Activated CD4-positive, alpha-beta memory T cell treated with anti-CD3 and anti-CD28 coated beads for 36 hours (primary cell): ENCODE measurements at regions of chr6 and their contacts with region 1.

Region 1: GRCh38 chr6:150600301-150601017 is 774 bp downstream of the PLEKHG1 start:
- DNase-seq: peak; percentile 89
- H3K4me3 Mint-ChIP-seq: peak overlapping the region; percentile 84
- H3K27ac Mint-ChIP-seq: peak overlapping the region; percentile 88
- H3K4me1 Mint-ChIP-seq: peaks cover 19% of the 10 kb centered on the region
- H3K27me3 Mint-ChIP-seq: peaks cover 48% of the 10 kb centered on the region

Region 2: GRCh38 chr6:150391890-150392289 is 208.6 kb before region 1 on chr6:
- CTCF ChIA-PET with region 1: no interaction called
- POLR2A ChIA-PET with region 1: no interaction called
- intact Hi-C with region 1: no loop called
- DNase-seq: no peak
- H3K4me3 Mint-ChIP-seq: no peak overlapping the region
- H3K27ac Mint-ChIP-seq: no peak overlapping the region
- H3K4me1 Mint-ChIP-seq: no peaks in the 10 kb centered on the region
- H3K27me3 Mint-ChIP-seq: peaks cover 10% of the 10 kb centered on the region

Region 3: GRCh38 chr6:150478651-150479545 is 121.6 kb before region 1 on chr6:
- CTCF ChIA-PET with region 1: no interaction called
- POLR2A ChIA-PET with region 1: no interaction called
- intact Hi-C with region 1: no loop called
- DNase-seq: no peak
- H3K4me3 Mint-ChIP-seq: no peak overlapping the region
- H3K27ac Mint-ChIP-seq: no peak overlapping the region
- H3K4me1 Mint-ChIP-seq: no peaks in the 10 kb centered on the region
- H3K27me3 Mint-ChIP-seq: peaks cover 6% of the 10 kb centered on the region

Region 4: DNA sequence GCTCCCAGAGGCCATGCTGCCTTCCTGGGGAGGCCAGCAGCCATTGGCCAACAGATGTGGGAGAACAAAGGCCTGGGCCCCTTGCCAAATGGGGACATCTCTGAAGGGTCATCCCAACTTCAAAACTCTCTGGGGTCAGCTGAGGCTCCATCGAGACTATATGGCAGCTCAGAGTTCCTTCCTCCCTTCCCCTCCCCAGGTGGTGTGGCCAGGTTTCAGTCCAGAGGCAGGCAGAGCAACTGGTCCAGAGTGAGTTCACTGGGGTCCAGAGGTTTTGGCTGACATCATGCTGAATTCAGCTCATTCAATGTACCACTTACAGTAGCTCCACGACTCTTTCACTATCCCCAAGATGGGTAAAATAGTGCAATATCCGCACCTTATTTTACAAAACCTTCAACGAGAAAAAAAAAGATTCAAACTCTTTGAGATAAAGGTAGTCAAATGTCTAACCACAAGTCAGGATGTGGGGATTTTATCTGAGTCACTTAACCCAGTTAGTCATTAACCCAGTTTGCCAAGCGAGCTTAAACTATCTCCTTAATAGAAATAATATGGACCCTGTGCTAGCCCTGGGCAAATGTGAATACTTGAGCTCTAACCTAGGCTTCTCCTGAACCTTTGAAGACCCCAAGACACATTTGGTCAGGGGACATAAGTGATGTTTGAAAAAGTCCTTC is 109.2 kb before region 1 on chr6:
- CTCF ChIA-PET with region 1: interaction called, 4 read pairs
- POLR2A ChIA-PET with region 1: interaction called, 3 read pairs
- intact Hi-C with region 1: loop called (anchors 1 kb)
- DNase-seq: peak; percentile 35
- H3K4me3 Mint-ChIP-seq: no peak overlapping the region
- H3K27ac Mint-ChIP-seq: peak overlapping the region; percentile 73
- H3K4me1 Mint-ChIP-seq: peaks cover 25% of the 10 kb centered on the region
- H3K27me3 Mint-ChIP-seq: no peaks in the 10 kb centered on the region

Region 5: GRCh38 chr6:150617496-150618460 is 17.3 kb after region 1 on chr6:
- CTCF ChIA-PET with region 1: interaction called, 4 read pairs
- POLR2A ChIA-PET with region 1: no interaction called
- intact Hi-C with region 1: loop called (anchors 2 kb)
- DNase-seq: no peak
- H3K4me3 Mint-ChIP-seq: no peak overlapping the region
- H3K27ac Mint-ChIP-seq: no peak overlapping the region
- H3K4me1 Mint-ChIP-seq: peaks cover 9% of the 10 kb centered on the region
- H3K27me3 Mint-ChIP-seq: peaks cover 12% of the 10 kb centered on the region

Region 6: DNA sequence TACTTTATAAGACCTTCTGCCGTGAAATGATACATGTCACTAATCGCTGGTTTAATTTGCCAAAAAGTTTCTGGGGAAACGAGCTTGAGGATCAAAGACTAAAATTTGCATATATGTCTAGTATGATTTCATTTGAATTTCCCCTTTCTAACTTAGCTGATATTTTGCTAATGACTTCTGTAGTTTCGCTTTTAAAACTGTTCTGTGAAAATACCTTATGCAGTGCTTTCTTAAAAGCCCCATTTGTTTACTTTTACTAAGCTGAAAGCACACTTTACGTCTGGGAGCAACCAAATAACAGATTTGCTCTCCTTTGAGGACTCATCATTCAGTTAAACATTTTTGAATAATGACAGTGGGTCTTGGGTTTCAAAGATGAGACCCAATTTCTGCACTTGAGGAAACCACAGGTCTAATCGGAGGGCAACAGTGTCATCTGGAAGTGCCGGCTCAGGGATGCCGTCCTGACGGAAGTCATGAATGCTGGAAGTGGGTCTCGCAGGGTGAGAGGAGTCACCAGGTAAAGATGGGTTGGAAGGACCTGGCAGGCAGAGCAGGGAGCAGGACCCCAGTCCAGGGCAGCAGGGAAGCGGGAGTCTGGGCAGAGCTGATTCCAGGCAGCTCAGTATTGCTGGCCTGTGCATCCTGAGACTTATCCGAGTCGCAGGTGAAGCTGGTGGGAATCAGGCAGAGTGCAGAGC is 32.5 kb after region 1 on chr6:
- CTCF ChIA-PET with region 1: interaction called, 5 read pairs
- POLR2A ChIA-PET with region 1: interaction called, 8 read pairs
- intact Hi-C with region 1: loop called (anchors 1 kb)
- DNase-seq: peak; percentile 17
- H3K4me3 Mint-ChIP-seq: peak overlapping the region; percentile 71
- H3K27ac Mint-ChIP-seq: peak overlapping the region; percentile 68
- H3K4me1 Mint-ChIP-seq: peaks cover 45% of the 10 kb centered on the region
- H3K27me3 Mint-ChIP-seq: peaks cover 12% of the 10 kb centered on the region

Region 7: DNA sequence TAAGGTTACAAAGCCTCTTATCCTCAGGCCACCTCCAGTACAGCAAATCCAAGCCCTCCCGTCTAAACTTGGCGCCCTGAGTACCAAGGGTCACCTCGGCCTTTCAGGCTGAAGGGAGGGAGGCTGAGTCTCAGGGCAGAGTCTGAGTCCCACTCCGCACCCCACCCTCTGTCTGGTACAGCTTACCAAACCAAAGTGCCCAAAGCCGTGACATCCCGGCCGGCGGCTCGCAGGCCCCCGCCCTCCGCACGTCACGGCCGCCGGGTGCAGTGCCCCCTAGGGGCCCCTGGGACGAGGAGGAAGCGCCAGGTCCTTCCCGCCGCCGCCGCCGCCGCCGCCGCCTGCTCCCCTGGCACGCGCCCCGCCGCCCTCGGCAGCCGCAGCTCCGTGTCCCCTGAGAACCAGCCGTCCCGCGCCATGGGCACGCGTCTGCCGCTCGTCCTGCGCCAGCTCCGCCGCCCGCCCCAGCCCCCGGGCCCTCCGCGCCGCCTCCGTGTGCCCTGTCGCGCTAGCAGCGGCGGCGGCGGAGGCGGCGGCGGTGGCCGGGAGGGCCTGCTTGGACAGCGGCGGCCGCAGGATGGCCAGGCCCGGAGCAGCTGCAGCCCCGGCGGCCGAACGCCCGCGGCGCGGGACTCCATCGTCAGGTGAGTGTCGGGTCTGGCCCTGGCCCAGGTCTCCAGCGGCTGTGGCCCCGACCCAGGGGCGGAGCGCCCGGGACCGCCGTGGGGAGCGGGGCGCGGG is 265.1 kb after region 1 on chr6 and contains the start of gene MTHFD1L:
- CTCF ChIA-PET with region 1: no interaction called
- POLR2A ChIA-PET with region 1: no interaction called
- intact Hi-C with region 1: loop called (anchors 5 kb)
- DNase-seq: peak; percentile 84
- H3K4me3 Mint-ChIP-seq: peak within 1 kb of the TSS; percentile 92
- H3K27ac Mint-ChIP-seq: peak within 1 kb of the TSS; percentile 91
- H3K4me1 Mint-ChIP-seq: peaks cover 22% of the 10 kb centered on the region
- H3K27me3 Mint-ChIP-seq: peaks cover 13% of the 10 kb centered on the region
- total RNA-seq, gene MTHFD1L: 115 to 119 TPM